Adrenal gland (tissue), 19 donors: ENCODE measurements at regions of chr1 and their contacts with region 1.

Region 1: GRCh38 chr1:244272471-244273261 is 179.0 kb downstream of the ADSS2 start:
- DNase-seq: peak; percentile 56 to 92 (median 76)
- H3K4me3 ChIP-seq: no peak overlapping the region
- H3K27ac ChIP-seq: peak overlapping the region in 1 of 5 donors; percentile 13
- H3K4me1 ChIP-seq: peaks cover 6 to 15% of the 10 kb centered on the region in 2 donors
- H3K27me3 ChIP-seq: no peaks in the 10 kb centered on the region
- CTCF ChIP-seq: peak; percentile 83 to 100 (median 97)
- POLR2A ChIP-seq: no peak

Region 2: DNA sequence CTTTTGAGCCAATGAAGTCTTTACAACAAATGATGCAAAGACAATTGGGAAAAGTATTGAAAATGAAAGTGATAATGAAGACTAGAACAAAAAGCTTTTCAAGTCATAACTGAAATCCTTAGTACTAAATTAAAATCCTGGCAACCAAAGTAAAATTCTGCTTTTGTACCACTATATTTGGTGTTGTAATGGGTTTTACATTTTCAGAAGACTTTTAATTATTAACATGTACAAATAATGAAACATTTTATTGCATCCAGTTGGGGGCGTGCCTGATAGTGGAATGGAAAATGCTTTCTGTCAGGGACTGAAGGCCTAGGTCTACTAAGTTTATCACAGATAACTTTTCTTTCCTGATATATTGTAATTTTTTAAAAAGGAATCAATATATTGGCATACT is 927.5 kb before region 1 on chr1:
- intact Hi-C with region 1: loop called in 1 of 2 experiments (anchors 5 kb)
- DNase-seq: peak in 2 of 7 donors; percentile 15 to 22
- H3K4me3 ChIP-seq: no peak overlapping the region
- H3K27ac ChIP-seq: no peak overlapping the region
- H3K4me1 ChIP-seq: no peaks in the 10 kb centered on the region
- H3K27me3 ChIP-seq: no peaks in the 10 kb centered on the region
- CTCF ChIP-seq: peak in 4 of 6 experiments; percentile 10 to 35 (median 21)
- POLR2A ChIP-seq: no peak

Region 3: DNA sequence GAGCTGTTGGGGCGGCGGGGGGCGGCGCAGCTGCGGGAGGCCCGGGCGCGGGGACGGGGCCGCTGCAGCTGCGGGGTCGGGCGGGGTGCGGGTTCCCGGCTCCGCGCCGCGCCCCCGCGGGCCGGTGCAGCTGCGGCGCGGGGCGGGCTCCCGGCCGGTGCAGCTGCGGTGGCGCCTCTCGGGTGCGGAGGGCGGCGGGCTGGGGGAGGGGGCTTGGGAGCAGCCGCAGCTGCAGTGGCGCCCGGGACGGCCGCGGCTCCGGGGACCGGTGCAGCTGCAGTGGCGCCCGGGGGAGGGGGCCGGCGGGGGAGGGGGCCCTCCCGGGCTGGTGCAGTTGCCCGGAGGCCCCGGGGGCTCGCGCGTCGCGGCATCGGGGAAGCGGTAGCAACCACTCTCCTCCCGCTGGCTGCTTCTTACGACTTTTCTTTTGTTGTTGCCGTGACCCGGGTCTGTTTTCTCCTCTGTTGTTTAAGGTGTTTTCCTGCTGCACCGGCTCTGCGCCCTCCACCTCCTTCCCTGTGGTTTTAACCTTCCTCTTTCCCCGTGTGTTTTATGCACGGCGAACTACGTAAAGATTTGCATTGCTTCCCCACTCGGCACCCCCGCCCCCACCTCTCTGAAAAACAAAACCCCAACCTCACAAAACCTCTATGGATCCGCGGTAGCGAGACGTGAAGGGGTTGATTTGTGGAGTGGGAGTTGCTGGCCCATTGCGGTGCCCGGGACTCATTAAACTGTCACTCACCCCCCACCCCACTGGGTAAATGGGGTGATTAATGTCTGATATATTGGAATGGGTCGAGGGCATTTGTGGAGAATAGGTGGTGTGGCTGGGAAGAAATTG is 223.3 kb before region 1 on chr1:
- intact Hi-C with region 1: loop called in 1 of 2 experiments (anchors 10 kb)
- DNase-seq: peak in 6 of 7 donors; percentile 22 to 60 (median 41)
- H3K4me3 ChIP-seq: peak overlapping the region in 3 of 4 donors; percentile 46 to 91 (median 85)
- H3K27ac ChIP-seq: peak overlapping the region in 2 of 5 donors; percentile 27 to 93
- H3K4me1 ChIP-seq: peaks cover 15 to 28% of the 10 kb centered on the region in 2 donors
- H3K27me3 ChIP-seq: no peaks in the 10 kb centered on the region
- CTCF ChIP-seq: no peak
- POLR2A ChIP-seq: no peak

Region 4: DNA sequence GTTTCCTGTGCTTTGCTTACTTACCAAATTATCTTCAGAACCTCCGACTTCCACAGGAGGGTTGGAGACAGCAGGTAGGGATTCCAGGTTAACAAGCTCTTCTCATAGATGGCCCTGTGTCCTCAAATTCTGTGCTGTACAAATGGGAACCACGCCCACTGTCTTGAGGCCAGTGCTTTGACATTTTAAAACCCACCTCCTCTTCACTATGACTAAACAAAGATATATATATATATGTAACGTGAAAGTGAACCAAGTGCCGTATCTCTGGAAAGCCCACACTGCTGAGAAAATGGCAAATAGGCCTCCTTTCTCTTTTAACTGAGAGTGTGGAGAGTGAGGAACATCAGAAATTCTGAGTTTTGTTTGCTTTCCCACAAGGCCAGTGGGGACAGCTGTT is 122.0 kb before region 1 on chr1:
- intact Hi-C with region 1: no loop called
- DNase-seq: no peak
- H3K4me3 ChIP-seq: no peak overlapping the region
- H3K27ac ChIP-seq: no peak overlapping the region
- H3K4me1 ChIP-seq: no peaks in the 10 kb centered on the region
- H3K27me3 ChIP-seq: no peaks in the 10 kb centered on the region
- CTCF ChIP-seq: no peak
- POLR2A ChIP-seq: no peak